A549 (cell line): ENCODE measurements at regions of chr1 and their contacts with region 1.

Region 1: GRCh38 chr1:211514030-211514754 is 22.2 kb upstream of the RD3 start:
- DNase-seq: peak; percentile 92 to 97
- ATAC-seq: peak; percentile 72 to 86
- H3K4me3 ChIP-seq: no peak overlapping the region
- H3K27ac ChIP-seq: peak overlapping the region; percentile 94 to 95
- H3K4me1 ChIP-seq: peaks cover 31% of the 10 kb centered on the region
- CTCF ChIP-seq: peak; percentile 87
- EP300 ChIP-seq: no peak
- POLR2A ChIP-seq: peak; percentile 35; the same call in 1 of the 2 replicates
- RAD21 ChIP-seq: peak; percentile 92

Region 2: GRCh38 chr1:210448297-210448892 is 1065.8 kb before region 1 on chr1:
- CTCF ChIA-PET with region 1: interaction called, 10 read pairs
- POLR2A ChIA-PET with region 1: no interaction called
- DNase-seq: peak; percentile 36 to 58
- ATAC-seq: peak; percentile 59 to 90; a peak in 4 of 6 replicates
- H3K4me3 ChIP-seq: no peak overlapping the region
- H3K27ac ChIP-seq: peak overlapping the region; percentile 18 to 72; a peak in 4 of 6 replicates
- H3K4me1 ChIP-seq: peaks cover 30% of the 10 kb centered on the region
- CTCF ChIP-seq: peak; percentile 89
- EP300 ChIP-seq: no peak
- POLR2A ChIP-seq: no peak
- RAD21 ChIP-seq: peak; percentile 92

Region 3: DNA sequence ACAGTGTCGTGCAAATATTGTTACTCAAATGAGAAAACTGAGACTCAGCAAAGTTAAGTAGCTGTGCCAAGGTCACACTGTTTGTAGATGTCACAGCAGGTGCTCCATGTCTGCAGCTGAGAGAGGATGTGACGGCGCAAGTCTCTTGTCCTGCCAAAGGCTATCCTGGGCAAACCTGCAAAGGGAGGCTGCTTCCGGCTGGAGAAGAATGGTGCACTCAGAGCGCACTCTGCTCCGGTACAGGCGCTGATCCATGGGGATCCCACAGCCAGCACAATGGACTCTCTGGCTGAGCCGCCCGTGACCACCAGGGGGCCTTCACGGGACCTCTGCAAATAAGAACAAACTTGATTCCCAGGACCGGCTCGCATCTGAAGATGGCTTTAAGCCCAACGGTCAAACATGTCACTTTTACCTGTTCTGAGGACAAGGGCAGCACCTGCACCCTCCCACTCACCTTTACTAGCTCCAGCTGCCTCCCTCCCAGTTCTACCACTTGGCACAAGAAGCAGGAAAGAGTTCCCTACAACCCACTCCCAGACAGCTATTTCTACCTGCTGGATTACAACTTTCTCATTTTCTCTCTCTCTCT is 44.2 kb before region 1 on chr1:
- CTCF ChIA-PET with region 1: interaction called, 99 read pairs
- POLR2A ChIA-PET with region 1: interaction called, 3 read pairs
- DNase-seq: peak; percentile 83
- ATAC-seq: peak; percentile 98 to 100
- H3K4me3 ChIP-seq: no peak overlapping the region
- H3K27ac ChIP-seq: 0 out of 6 replicates have a peak overlapping the region, but pooled peaks of 1 of the 2 experiments have one; percentile 4
- H3K4me1 ChIP-seq: 0 out of 3 replicates have a peak, but pooled peaks cover 7% of the 10 kb centered on the region
- CTCF ChIP-seq: peak; percentile 83
- EP300 ChIP-seq: no peak
- POLR2A ChIP-seq: no peak
- RAD21 ChIP-seq: peak; percentile 62 to 64

Region 4: GRCh38 chr1:211492511-211493132 is 21.6 kb before region 1 on chr1:
- CTCF ChIA-PET with region 1: interaction called, 82 read pairs
- POLR2A ChIA-PET with region 1: no interaction called
- DNase-seq: no peak
- ATAC-seq: no peak
- H3K4me3 ChIP-seq: no peak overlapping the region
- H3K27ac ChIP-seq: no peak overlapping the region
- H3K4me1 ChIP-seq: no peaks in the 10 kb centered on the region
- CTCF ChIP-seq: no peak
- EP300 ChIP-seq: no peak
- POLR2A ChIP-seq: no peak
- RAD21 ChIP-seq: no peak

Region 5: GRCh38 chr1:211541720-211542453 is 27.7 kb after region 1 on chr1:
- CTCF ChIA-PET with region 1: interaction called, 11 read pairs
- POLR2A ChIA-PET with region 1: interaction called, 3 read pairs
- DNase-seq: no peak
- ATAC-seq: no peak
- H3K4me3 ChIP-seq: no peak overlapping the region
- H3K27ac ChIP-seq: no peak overlapping the region
- H3K4me1 ChIP-seq: no peaks in the 10 kb centered on the region
- CTCF ChIP-seq: no peak
- EP300 ChIP-seq: no peak
- POLR2A ChIP-seq: no peak
- RAD21 ChIP-seq: no peak

Region 6: GRCh38 chr1:211632631-211633523 is 118.7 kb after region 1 on chr1:
- CTCF ChIA-PET with region 1: interaction called, 23 read pairs
- POLR2A ChIA-PET with region 1: no interaction called
- DNase-seq: no peak
- ATAC-seq: peak in 1 of 2 experiments; percentile 19; a peak in 4 of 6 replicates
- H3K4me3 ChIP-seq: no peak overlapping the region
- H3K27ac ChIP-seq: peak overlapping the region in 1 of 2 experiments; percentile 57; a peak in 3 of 6 replicates
- H3K4me1 ChIP-seq: peaks cover 30% of the 10 kb centered on the region
- CTCF ChIP-seq: no peak
- EP300 ChIP-seq: no peak
- POLR2A ChIP-seq: no peak
- RAD21 ChIP-seq: no peak